GM13976 (cell line): ENCODE measurements at regions of chrX and their contacts with region 1.

Region 1: DNA sequence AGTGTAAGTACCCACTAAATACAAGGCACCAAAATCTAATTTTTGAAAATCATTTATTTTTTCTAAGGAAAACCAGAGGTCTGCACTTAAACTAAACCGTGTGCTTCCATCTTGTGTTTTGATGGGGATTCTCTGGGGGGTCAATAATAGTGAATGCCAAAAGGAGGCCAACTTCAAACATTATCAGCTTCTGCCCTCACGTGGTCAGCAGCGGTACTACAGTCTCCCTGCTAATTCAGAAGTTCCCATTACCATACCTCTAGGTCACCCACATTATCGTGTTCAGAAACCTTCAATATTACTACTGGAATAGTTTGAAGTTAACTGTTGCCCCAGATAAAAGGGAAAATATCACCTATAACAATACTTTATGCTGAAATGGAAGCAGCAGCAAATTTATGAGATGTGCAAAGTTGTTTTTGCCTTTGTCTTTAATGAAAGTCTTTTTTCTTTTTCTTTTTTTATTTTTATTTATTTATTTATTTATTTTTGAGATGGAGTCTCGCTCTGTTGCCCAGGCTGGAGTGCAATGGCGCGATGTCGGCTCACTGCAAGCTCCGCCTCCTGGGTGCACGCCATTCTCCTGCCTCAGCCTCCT is 17.3 kb downstream of the CTPS2 start:
- DNase-seq: peak; percentile 65
- CTCF ChIP-seq: peak; percentile 89

Region 2: DNA sequence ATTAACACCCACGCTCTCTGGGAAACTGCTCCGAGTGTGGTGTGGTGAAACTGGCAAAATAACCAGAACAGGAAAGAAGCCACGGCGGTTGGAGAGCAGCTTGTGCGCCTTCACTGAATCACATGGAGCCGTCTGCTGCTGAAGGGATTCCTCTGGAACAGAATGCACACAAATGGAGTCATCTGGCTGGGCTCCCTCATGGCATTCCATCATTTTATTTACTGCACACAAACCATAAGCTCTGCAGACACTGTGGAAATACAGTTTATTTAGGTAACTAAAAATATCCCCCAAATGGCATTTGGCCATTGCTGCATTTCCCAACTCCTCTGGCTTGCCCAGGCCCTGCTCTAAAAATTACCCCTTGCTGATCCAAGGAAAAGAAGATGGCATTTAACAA is 232.3 kb before region 1 on chrX:
- in situ Hi-C with region 1: loop called (anchors 25 kb)
- DNase-seq: no peak
- CTCF ChIP-seq: no peak